Gastrocnemius medialis (tissue), 4 donors: ENCODE measurements at regions of chr4 and their contacts with region 1.

Region 1: GRCh38 chr4:122930862-122931261 is 8.5 kb upstream of the NUDT6 start:
- DNase-seq: no peak
- ATAC-seq: no peak
- H3K4me3 ChIP-seq: no peak overlapping the region
- H3K27ac ChIP-seq: no peak overlapping the region
- H3K4me1 ChIP-seq: peaks cover 0 to 4% of the 10 kb centered on the region in 2 donors
- H3K27me3 ChIP-seq: no peaks in the 10 kb centered on the region
- CTCF ChIP-seq: peak in 4 of 5 experiments; percentile 18 to 65 (median 42)
- POLR2A ChIP-seq: no peak

Region 2: GRCh38 chr4:122749704-122750454 is 181.0 kb before region 1 on chr4:
- in situ Hi-C with region 1: loop called in 2 of 4 experiments (anchors 5 to 10 kb)
- intact Hi-C with region 1: no loop called
- DNase-seq: no peak
- ATAC-seq: no peak
- H3K4me3 ChIP-seq: no peak overlapping the region
- H3K27ac ChIP-seq: no peak overlapping the region
- H3K4me1 ChIP-seq: no peaks in the 10 kb centered on the region
- H3K27me3 ChIP-seq: no peaks in the 10 kb centered on the region
- CTCF ChIP-seq: no peak
- POLR2A ChIP-seq: no peak

Region 3: GRCh38 chr4:122764821-122765215 is 166.0 kb before region 1 on chr4:
- in situ Hi-C with region 1: loop called in 1 of 4 experiments (anchors 5 kb)
- intact Hi-C with region 1: no loop called
- DNase-seq: no peak
- ATAC-seq: no peak
- H3K4me3 ChIP-seq: no peak overlapping the region
- H3K27ac ChIP-seq: no peak overlapping the region
- H3K4me1 ChIP-seq: peaks cover 0 to 4% of the 10 kb centered on the region in 2 donors
- H3K27me3 ChIP-seq: no peaks in the 10 kb centered on the region
- CTCF ChIP-seq: no peak
- POLR2A ChIP-seq: no peak

Region 4: DNA sequence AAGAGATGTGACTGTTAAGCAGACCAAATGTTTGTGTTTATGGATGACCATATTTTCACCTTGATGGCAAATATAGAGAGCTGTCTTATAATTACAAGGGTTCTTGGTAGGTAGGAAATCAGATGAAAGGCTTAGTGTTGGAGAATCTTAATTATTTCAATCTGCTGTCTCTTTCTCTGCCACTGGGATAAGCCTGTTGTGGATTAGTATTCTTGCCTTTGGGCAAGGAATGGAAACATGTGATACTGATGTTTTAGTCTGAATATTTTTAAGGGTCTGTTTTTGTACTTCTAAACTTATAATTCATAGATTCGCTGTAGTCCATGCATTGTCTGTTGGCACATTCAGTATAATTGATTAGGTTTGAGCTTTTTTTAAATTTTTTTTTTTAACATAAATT is 15.3 kb after region 1 on chr4:
- in situ Hi-C with region 1: no loop called
- intact Hi-C with region 1: no loop called
- DNase-seq: no peak
- ATAC-seq: no peak
- H3K4me3 ChIP-seq: no peak overlapping the region
- H3K27ac ChIP-seq: no peak overlapping the region
- H3K4me1 ChIP-seq: no peaks in the 10 kb centered on the region
- H3K27me3 ChIP-seq: no peaks in the 10 kb centered on the region
- CTCF ChIP-seq: no peak
- POLR2A ChIP-seq: no peak

Region 5: GRCh38 chr4:122963216-122963615 is 32.4 kb after region 1 on chr4:
- in situ Hi-C with region 1: no loop called
- intact Hi-C with region 1: no loop called
- DNase-seq: no peak
- ATAC-seq: no peak
- H3K4me3 ChIP-seq: no peak overlapping the region
- H3K27ac ChIP-seq: no peak overlapping the region
- H3K4me1 ChIP-seq: no peaks in the 10 kb centered on the region
- H3K27me3 ChIP-seq: no peaks in the 10 kb centered on the region
- CTCF ChIP-seq: no peak
- POLR2A ChIP-seq: no peak